Ovary (tissue), 10 donors: ENCODE measurements at regions of chr22 and their contacts with region 1.

Region 1: DNA sequence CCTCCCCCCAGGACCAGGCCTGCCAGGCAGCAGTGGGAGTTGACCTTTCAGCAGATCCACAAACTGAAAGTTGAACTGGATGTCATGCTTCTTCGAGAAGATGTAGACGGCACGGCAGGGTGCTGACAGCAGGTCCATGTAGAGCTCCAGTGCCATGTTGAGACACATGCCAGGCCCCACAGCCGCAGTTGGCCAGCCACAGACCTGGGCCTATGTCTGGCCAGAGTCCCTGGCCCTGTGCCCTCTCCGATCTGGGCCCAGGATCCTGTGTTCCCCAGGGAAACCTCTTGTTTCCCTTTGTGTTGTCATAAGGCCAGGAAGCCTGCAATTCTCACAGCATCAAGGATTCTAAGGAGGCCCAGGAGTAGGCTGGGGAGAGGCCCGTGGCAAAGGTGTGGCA is at the start of gene GSTT4:
- DNase-seq: peak in 1 of 5 donors; percentile 53
- H3K4me3 ChIP-seq: no peak within 1 kb of the TSS
- H3K27ac ChIP-seq: no peak within 1 kb of the TSS
- H3K4me1 ChIP-seq: no peaks in the 10 kb centered on the region
- H3K27me3 ChIP-seq: no peaks in the 10 kb centered on the region
- CTCF ChIP-seq: no peak
- EP300 ChIP-seq: no peak
- POLR2A ChIP-seq: no peak
- total RNA-seq, gene GSTT4: not detected

Region 2: GRCh38 chr22:24170248-24170630 is 165.0 kb after region 1 on chr22:
- intact Hi-C with region 1: loop called in 1 of 4 experiments (anchors 5 kb)
- DNase-seq: no peak
- H3K4me3 ChIP-seq: no peak overlapping the region
- H3K27ac ChIP-seq: no peak overlapping the region
- H3K4me1 ChIP-seq: no peaks in the 10 kb centered on the region
- H3K27me3 ChIP-seq: no peaks in the 10 kb centered on the region
- CTCF ChIP-seq: no peak
- EP300 ChIP-seq: no peak
- POLR2A ChIP-seq: no peak

Region 3: DNA sequence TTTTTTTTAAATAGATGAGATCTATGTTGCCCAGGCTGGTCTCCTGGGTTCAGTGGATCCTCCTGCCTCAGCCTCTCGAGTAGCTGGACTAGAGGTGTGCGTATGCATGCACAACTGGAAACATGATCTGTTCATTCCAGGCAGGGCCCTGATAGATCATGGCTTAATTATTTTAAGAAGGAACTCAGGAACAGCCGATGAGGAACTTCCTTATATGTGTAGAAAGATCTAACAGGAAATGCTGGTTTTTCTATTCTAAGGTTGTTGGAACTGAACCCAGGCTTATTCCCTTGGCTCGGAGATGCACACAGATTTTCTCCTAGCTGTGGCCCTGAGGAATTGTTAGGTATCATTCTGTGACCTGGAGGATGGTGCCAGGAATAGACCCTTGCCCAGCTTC is 297.8 kb after region 1 on chr22:
- intact Hi-C with region 1: no loop called
- DNase-seq: no peak
- H3K4me3 ChIP-seq: no peak overlapping the region
- H3K27ac ChIP-seq: no peak overlapping the region
- H3K4me1 ChIP-seq: peaks cover 9% of the 10 kb centered on the region
- H3K27me3 ChIP-seq: no peaks in the 10 kb centered on the region
- CTCF ChIP-seq: no peak
- EP300 ChIP-seq: no peak
- POLR2A ChIP-seq: no peak